CD4-positive, alpha-beta memory T cell (primary cell): ENCODE measurements at regions of chr2 and their contacts with region 1.

Region 1: DNA sequence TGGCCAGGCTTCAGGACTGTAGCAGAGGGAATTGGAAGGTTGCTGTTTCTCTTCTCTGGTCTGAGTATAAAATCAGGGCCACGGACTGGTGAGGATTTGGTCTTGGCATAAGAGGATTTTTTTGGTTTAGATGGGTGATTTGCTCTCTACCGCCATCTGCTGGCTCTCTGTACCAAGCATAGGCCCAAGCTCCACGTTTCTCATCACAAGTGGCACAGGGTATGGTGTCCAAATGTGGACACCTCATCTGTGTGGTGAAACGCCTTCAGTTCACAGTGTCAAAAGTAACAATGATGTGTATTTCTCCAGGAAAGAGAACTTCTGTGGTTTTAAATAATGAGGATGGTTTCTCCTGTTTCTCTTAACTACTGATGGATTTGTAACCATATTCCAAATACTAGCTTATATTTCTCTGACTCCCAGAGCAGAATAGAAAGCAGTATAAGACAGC is 115.1 kb downstream of the EML6 start:
- DNase-seq: peak; percentile 40 to 51 (median 49)
- H3K4me3 ChIP-seq: no peak overlapping the region
- H3K4me3 Mint-ChIP-seq: no peak overlapping the region
- H3K27ac ChIP-seq: no peak overlapping the region
- H3K27ac Mint-ChIP-seq: no peak overlapping the region
- H3K4me1 ChIP-seq: no peaks in the 10 kb centered on the region
- H3K4me1 Mint-ChIP-seq: peaks cover 0 to 2% (median 0%) of the 10 kb centered on the region in 4 donors
- H3K27me3 ChIP-seq: no peaks in the 10 kb centered on the region
- H3K27me3 Mint-ChIP-seq: peaks cover 0 to 1% of the 10 kb centered on the region in 2 donors

Region 2: DNA sequence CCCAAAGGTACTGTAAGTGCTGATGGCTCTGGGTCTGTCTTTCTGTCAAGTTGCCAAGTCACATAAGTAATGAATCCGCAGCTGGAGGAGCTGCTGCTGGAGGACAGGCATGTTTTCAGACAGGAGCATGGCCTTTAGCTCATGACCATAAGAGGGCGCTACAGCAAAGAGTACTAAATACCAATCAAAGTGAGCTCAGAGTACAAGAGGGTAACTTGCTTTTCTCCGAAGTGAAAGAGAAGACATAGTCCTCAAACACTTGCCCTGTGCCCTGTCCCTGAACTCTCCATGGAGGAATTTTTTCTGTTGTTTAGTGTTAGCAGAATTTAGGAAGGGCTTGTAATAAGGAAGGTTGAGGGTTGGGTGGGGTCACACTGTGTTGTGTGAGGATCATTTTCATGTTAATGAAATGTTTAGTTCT is 173.2 kb before region 1 on chr2:
- CTCF ChIA-PET with region 1: interaction called, 15 read pairs
- POLR2A ChIA-PET with region 1: no interaction called
- intact Hi-C with region 1: loop called (anchors 2 kb)
- DNase-seq: peak; percentile 11 to 52 (median 34)
- H3K4me3 ChIP-seq: no peak overlapping the region
- H3K4me3 Mint-ChIP-seq: no peak overlapping the region
- H3K27ac ChIP-seq: no peak overlapping the region
- H3K27ac Mint-ChIP-seq: peak overlapping the region in 6 of 7 donors; percentile 9 to 85 (median 70)
- H3K4me1 ChIP-seq: no peaks in the 10 kb centered on the region
- H3K4me1 Mint-ChIP-seq: peaks cover 0 to 13% (median 3%) of the 10 kb centered on the region in 4 donors
- H3K27me3 ChIP-seq: no peaks in the 10 kb centered on the region
- H3K27me3 Mint-ChIP-seq: no peaks in the 10 kb centered on the region

Region 3: DNA sequence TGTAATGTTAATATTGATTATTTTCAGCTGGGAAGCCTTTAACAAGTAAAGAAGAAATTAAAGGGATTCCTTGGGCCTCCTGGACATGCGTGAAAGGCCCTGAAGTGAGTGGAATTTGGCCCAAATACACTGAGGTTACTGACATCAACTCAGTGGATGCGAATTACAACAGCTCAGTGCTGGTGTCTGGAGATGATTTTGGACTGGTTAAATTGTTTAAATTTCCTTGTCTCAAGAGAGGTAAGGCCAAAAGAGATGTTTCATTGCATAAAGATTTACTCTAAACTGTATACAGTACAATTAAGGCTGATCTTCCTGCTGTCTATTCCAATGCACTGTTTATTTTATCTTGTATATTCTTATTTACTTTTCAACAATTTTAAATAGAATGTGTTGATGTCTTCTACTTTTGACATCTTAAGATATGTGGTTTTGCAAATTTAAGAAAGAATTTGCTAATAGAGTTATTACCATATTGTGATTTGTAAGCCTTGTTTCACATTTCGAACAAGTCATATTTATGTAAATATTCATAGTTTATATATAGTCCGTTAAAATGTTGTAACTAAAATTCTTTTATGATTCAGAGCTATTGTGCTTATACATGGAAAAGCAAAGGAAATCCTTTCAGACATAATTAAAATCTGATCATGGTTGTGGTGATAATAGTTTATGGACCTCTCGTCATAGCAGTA is 15.2 kb after region 1 on chr2:
- CTCF ChIA-PET with region 1: interaction called, 14 read pairs
- POLR2A ChIA-PET with region 1: no interaction called
- intact Hi-C with region 1: no loop called
- DNase-seq: no peak
- H3K4me3 ChIP-seq: no peak overlapping the region
- H3K4me3 Mint-ChIP-seq: no peak overlapping the region
- H3K27ac ChIP-seq: no peak overlapping the region
- H3K27ac Mint-ChIP-seq: no peak overlapping the region
- H3K4me1 ChIP-seq: no peaks in the 10 kb centered on the region
- H3K4me1 Mint-ChIP-seq: no peaks in the 10 kb centered on the region
- H3K27me3 ChIP-seq: no peaks in the 10 kb centered on the region
- H3K27me3 Mint-ChIP-seq: no peaks in the 10 kb centered on the region

Region 4: GRCh38 chr2:55168221-55169154 is 329.9 kb after region 1 on chr2:
- CTCF ChIA-PET with region 1: interaction called, 27 read pairs
- POLR2A ChIA-PET with region 1: no interaction called
- intact Hi-C with region 1: no loop called
- DNase-seq: peak; percentile 37 to 50 (median 41)
- H3K4me3 ChIP-seq: no peak overlapping the region
- H3K4me3 Mint-ChIP-seq: no peak overlapping the region
- H3K27ac ChIP-seq: no peak overlapping the region
- H3K27ac Mint-ChIP-seq: peak overlapping the region in 1 of 7 donors; percentile 0
- H3K4me1 ChIP-seq: no peaks in the 10 kb centered on the region
- H3K4me1 Mint-ChIP-seq: peaks cover 0 to 3% (median 1%) of the 10 kb centered on the region in 4 donors
- H3K27me3 ChIP-seq: no peaks in the 10 kb centered on the region
- H3K27me3 Mint-ChIP-seq: no peaks in the 10 kb centered on the region